HepG2 (cell line): ENCODE measurements at regions of chr1 and their contacts with region 1.

Region 1: DNA sequence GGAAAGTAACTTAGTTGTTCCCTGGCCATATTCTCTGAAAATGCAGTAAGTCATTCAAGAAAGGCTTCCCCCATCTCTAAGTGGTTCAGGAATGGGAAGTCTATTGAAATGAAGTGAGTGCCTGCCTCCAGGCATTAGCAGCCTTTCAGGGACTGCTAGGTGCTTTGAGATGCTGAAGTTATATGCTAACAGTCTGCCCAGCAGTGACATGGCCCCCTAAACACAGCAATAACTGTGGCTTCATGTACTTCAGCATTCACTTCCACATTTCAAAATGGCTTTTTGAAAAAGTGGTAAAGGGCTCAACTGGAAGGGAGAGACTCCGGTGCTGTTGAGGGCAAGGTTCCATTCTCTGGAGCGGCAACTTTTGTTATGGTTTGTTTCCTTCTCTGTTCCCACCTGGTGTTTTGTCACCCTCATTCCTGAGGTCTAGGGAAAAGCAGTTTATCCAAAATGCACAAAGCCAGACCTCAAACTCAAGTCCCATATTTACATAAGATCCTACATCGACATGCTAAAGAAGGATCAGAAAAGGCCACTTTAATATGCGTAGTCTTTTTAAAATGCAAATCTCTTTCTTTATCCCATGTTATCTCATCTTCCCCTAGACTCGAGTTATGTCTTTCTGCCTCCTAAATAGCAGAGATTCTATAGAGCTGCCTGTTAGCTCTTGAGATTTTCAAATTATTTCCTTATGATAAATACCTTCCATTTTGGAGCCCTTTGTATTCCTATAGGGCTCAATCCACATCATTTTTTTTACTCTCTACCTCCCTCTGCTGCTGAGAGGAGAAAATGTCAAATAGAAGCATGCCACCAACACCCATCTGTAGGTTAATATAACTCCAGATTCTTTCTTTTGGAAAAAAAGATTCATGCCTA is 34.2 kb upstream of the LRRC8C start:
- DNase-seq: peak; percentile 39
- ATAC-seq: peak; percentile 89
- H3K4me3 ChIP-seq: no peak overlapping the region
- H3K27ac ChIP-seq: no peak overlapping the region
- H3K4me1 ChIP-seq: peaks cover under 1% of the 10 kb centered on the region
- H3K27me3 ChIP-seq: no peaks in the 10 kb centered on the region
- CTCF ChIP-seq: peak; percentile 64
- EP300 ChIP-seq: no peak
- POLR2A ChIP-seq: no peak
- RAD21 ChIP-seq: peak; percentile 46; the same call in 1 of the 2 replicates

Region 2: GRCh38 chr1:89483010-89483756 is 115.5 kb before region 1 on chr1:
- CTCF ChIA-PET with region 1: interaction called, 34 read pairs
- POLR2A ChIA-PET with region 1: no interaction called
- in situ Hi-C with region 1: loop called (anchors 5 kb)
- intact Hi-C with region 1: loop called (anchors 1 kb)
- DNase-seq: peak; percentile 59
- ATAC-seq: peak; percentile 87
- H3K4me3 ChIP-seq: no peak overlapping the region
- H3K27ac ChIP-seq: no peak overlapping the region
- H3K4me1 ChIP-seq: no peaks in the 10 kb centered on the region
- H3K27me3 ChIP-seq: no peaks in the 10 kb centered on the region; a peak in 1 of 5 replicates
- CTCF ChIP-seq: peak; percentile 80
- EP300 ChIP-seq: no peak
- POLR2A ChIP-seq: no peak
- RAD21 ChIP-seq: 0 out of 2 replicates have a peak, but pooled peaks have one; percentile 21

Region 3: GRCh38 chr1:89489047-89489729 is 109.5 kb before region 1 on chr1:
- CTCF ChIA-PET with region 1: interaction called, 34 read pairs
- POLR2A ChIA-PET with region 1: no interaction called
- in situ Hi-C with region 1: loop called (anchors 5 kb)
- intact Hi-C with region 1: no loop called
- DNase-seq: no peak
- ATAC-seq: no peak
- H3K4me3 ChIP-seq: no peak overlapping the region
- H3K27ac ChIP-seq: no peak overlapping the region
- H3K4me1 ChIP-seq: no peaks in the 10 kb centered on the region
- H3K27me3 ChIP-seq: no peaks in the 10 kb centered on the region; a peak in 1 of 5 replicates
- CTCF ChIP-seq: no peak
- EP300 ChIP-seq: no peak
- POLR2A ChIP-seq: no peak
- RAD21 ChIP-seq: no peak

Region 4: DNA sequence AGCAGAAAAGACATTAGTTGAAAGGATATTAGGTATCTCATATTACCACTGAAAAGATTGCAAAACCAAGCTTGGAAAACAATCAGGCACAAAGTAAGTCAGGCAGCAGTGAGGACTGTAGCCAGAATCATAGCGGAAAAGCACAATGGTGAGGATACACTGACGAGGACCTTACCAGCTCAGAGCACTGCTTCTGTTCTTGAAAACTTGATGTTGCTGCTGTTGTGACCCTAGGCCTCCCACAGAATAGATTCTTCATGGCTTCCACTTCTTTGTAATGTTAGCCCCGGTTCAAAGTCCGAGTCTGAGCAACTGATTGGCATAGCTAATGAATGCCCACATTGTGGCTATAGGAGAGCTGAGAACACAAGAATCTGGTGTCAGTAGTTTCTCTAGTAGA is 11.0 kb before region 1 on chr1:
- CTCF ChIA-PET with region 1: no interaction called
- POLR2A ChIA-PET with region 1: no interaction called
- in situ Hi-C with region 1: no loop called
- intact Hi-C with region 1: no loop called
- DNase-seq: peak; percentile 96
- ATAC-seq: peak; percentile 93
- H3K4me3 ChIP-seq: peak overlapping the region in 1 of 3 experiments; percentile 50; a peak in 1 of 6 replicates
- H3K27ac ChIP-seq: peak overlapping the region; percentile 81
- H3K4me1 ChIP-seq: peaks cover 40% of the 10 kb centered on the region
- H3K27me3 ChIP-seq: no peaks in the 10 kb centered on the region
- CTCF ChIP-seq: no peak
- EP300 ChIP-seq: peak in 1 of 2 experiments; percentile 38; a peak in 1 of 4 replicates
- POLR2A ChIP-seq: peak in 1 of 2 experiments; percentile 64; a peak in 2 of 4 replicates
- RAD21 ChIP-seq: no peak